Gastrocnemius medialis (tissue), 4 donors: ENCODE measurements at regions of chr20 and their contacts with region 1.

Region 1: DNA sequence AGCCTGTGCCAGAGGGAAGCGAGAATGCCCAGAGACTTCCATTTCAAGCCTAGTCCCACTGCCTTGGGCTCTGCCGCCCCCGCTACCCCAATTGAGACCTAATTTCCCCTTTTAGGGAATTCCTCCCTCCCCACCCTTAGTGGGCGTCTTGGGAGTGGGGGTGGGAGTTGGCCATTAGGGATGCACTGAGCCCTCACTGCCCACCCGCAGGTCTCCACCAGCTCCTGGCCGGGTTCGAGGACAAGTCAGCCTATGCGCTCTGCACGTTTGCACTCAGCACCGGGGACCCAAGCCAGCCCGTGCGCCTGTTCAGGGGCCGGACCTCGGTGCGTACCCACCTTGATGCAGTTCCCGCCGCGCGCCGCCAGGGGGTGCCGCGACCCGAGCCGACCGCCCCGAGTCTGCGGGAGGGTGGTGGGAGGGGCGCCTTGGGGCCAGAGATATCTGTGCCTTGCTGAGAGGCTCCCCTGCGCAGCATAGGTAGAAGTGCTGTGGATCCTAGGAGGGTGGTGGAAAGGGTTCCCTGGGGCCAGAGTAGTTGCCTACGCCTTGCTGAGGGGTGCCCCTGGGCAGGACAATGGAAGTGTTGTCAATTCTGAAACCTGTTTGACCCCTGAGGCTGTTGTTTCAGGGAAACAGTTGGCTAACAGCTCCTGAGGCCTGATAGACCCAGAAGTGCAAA is 9.2 kb downstream of the ITPA start:
- DNase-seq: peak in 1 of 2 donors; percentile 45
- ATAC-seq: peak in 1 of 2 donors; percentile 32
- H3K4me3 ChIP-seq: no peak overlapping the region
- H3K27ac ChIP-seq: no peak overlapping the region
- H3K4me1 ChIP-seq: peaks cover 23 to 26% of the 10 kb centered on the region in 2 donors
- H3K27me3 ChIP-seq: no peaks in the 10 kb centered on the region
- CTCF ChIP-seq: peak; percentile 77 to 96 (median 92)
- POLR2A ChIP-seq: no peak

Region 2: DNA sequence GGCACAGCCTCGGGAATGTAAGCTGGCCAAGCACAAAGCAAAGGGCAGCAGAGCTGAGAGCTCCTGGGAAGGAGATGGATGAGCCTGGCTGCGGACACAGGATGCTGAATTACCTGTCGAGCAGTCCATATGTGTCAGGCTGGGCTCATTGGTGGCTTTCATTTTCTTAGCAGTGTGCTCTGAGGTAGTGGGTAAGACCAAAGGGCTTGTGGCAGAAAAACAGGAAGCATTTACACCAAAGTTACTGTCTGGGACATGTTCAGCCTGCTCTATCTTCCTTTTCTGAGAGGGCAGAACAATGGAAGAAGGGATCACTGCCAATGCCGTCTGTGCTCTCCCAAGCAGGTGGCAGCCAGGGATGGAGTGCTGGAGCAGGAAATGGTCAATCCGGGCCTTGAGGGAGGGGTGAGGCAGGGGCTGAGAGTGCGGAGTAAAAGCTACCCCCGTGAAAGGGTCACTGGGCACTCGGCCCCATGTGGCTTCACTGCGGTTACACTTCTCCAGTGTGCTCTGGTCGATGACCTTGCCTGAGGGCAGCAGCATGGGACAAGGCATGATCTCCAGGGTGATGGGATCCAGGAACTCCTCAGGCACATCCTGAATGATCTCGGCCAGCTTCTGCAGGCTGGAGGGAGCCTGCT is 97.1 kb before region 1 on chr20:
- in situ Hi-C with region 1: no loop called
- intact Hi-C with region 1: loop called (anchors 5 kb)
- DNase-seq: peak in 1 of 2 donors; percentile 15
- ATAC-seq: no peak
- H3K4me3 ChIP-seq: no peak overlapping the region
- H3K27ac ChIP-seq: peak overlapping the region; percentile 70 to 86 (median 82)
- H3K4me1 ChIP-seq: peaks cover 19 to 26% of the 10 kb centered on the region in 2 donors
- H3K27me3 ChIP-seq: no peaks in the 10 kb centered on the region
- CTCF ChIP-seq: no peak
- POLR2A ChIP-seq: no peak

Region 3: DNA sequence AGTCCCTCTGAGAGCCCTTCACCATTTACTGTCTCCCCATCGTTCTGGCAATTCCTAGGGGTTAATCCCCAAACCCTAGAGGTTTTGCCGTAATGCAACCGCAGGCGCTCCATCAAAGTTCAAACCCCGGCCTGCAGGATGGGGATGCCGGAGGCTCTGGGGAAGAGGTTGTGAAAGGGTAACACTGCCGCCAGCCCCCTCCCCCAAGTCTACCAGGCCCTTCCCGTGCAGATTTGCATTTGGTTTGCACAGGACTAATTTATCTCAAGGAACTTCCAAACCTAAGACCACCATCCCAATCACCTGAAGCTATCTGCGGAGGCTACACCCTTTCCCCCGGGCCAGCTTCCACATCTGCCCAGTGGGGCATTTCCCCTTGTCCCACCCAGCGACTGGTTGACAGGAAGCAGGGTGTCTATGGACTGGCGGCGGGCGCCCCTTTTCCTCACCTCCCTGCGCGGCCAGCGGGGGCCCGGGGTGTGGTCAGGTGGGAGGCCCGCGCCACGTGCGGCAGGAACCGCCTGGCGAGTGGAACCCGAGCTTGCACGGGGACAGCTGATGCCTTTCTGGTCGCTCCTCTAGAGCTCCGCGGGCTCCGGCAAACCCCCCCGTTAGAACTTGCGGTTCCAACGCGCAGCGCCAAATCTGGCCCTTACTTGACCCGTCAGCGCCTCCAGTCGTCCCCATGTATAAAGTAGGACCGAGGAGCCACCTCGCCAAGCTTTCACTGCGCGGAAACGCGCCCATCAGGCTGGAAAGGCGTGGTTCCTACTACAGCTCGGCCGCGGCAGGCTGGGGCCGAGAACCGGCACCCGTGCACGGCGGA is 29.9 kb after region 1 on chr20:
- in situ Hi-C with region 1: no loop called
- intact Hi-C with region 1: loop called (anchors 2 kb)
- DNase-seq: peak in 1 of 2 donors; percentile 56
- ATAC-seq: peak; percentile 39 to 40
- H3K4me3 ChIP-seq: peak overlapping the region; percentile 4 to 19 (median 14)
- H3K27ac ChIP-seq: peak overlapping the region; percentile 46 to 63 (median 48)
- H3K4me1 ChIP-seq: peaks cover 12 to 15% of the 10 kb centered on the region in 2 donors
- H3K27me3 ChIP-seq: no peaks in the 10 kb centered on the region
- CTCF ChIP-seq: no peak
- POLR2A ChIP-seq: no peak

Region 4: DNA sequence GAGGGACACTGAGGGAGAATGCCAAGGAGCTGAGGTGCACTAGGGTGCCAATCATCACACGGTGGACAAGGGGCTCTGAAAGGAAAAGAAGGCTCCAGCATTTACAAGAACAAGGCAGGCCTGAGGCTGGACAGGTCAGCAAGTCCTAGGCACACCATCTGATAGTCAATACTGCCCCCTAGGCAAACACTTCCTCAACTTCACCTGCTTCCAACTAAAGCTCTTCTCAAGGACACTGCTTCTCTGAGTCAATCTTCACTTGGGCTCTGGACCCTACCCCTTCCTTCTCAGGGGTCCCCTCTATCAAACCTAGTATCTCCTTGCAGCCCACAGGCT is 58.2 kb after region 1 on chr20:
- in situ Hi-C with region 1: no loop called
- intact Hi-C with region 1: loop called (anchors 5 kb)
- DNase-seq: no peak
- ATAC-seq: peak; percentile 43 to 63
- H3K4me3 ChIP-seq: no peak overlapping the region
- H3K27ac ChIP-seq: peak overlapping the region; percentile 18 to 47 (median 30)
- H3K4me1 ChIP-seq: peaks cover 23 to 28% of the 10 kb centered on the region in 2 donors
- H3K27me3 ChIP-seq: no peaks in the 10 kb centered on the region
- CTCF ChIP-seq: peak in 2 of 5 experiments; percentile 32 to 36
- POLR2A ChIP-seq: no peak

Region 5: GRCh38 chr20:3521852-3522740 is 303.6 kb after region 1 on chr20:
- in situ Hi-C with region 1: no loop called
- intact Hi-C with region 1: no loop called
- DNase-seq: no peak
- ATAC-seq: no peak
- H3K4me3 ChIP-seq: no peak overlapping the region
- H3K27ac ChIP-seq: no peak overlapping the region
- H3K4me1 ChIP-seq: no peaks in the 10 kb centered on the region
- H3K27me3 ChIP-seq: no peaks in the 10 kb centered on the region
- CTCF ChIP-seq: no peak
- POLR2A ChIP-seq: no peak